ENCODE measurements at regions of chr17 and their contacts with region 1.

Region 1: GRCh38 chr17:55735731-55736405 is 13.2 kb upstream of the TMEM100 start:
- DNase-seq: peak; percentile 24
- ATAC-seq: peak; percentile 46
- H3K4me3 Mint-ChIP-seq: no peak overlapping the region
- H3K27ac Mint-ChIP-seq: no peak overlapping the region
- H3K4me1 Mint-ChIP-seq: peaks cover 46% of the 10 kb centered on the region
- H3K27me3 Mint-ChIP-seq: no peaks in the 10 kb centered on the region
- CTCF ChIP-seq: peak; percentile 18; the same call in 1 of the 2 replicates

Region 2: GRCh38 chr17:55673743-55674506 is 61.9 kb before region 1 on chr17:
- CTCF ChIA-PET with region 1: no interaction called
- POLR2A ChIA-PET with region 1: no interaction called
- DNase-seq: no peak
- ATAC-seq: no peak
- H3K4me3 Mint-ChIP-seq: no peak overlapping the region
- H3K27ac Mint-ChIP-seq: no peak overlapping the region
- H3K4me1 Mint-ChIP-seq: peaks cover 19% of the 10 kb centered on the region
- H3K27me3 Mint-ChIP-seq: no peaks in the 10 kb centered on the region; the same call in 1 of the 2 replicates
- CTCF ChIP-seq: no peak

Region 3: GRCh38 chr17:55750750-55751657 is 15.1 kb after region 1 on chr17 and contains the start of gene PCTP:
- CTCF ChIA-PET with region 1: interaction called, 22 read pairs
- POLR2A ChIA-PET with region 1: interaction called, 3 read pairs
- DNase-seq: peak; percentile 96
- ATAC-seq: peak; percentile 97
- H3K4me3 Mint-ChIP-seq: peak within 1 kb of the TSS; percentile 88
- H3K27ac Mint-ChIP-seq: peak within 1 kb of the TSS; percentile 65; the same call in 1 of the 2 replicates
- H3K4me1 Mint-ChIP-seq: peaks cover 14% of the 10 kb centered on the region
- H3K27me3 Mint-ChIP-seq: no peaks in the 10 kb centered on the region
- CTCF ChIP-seq: no peak
- total RNA-seq, gene PCTP: 10.3 to 14.2 TPM (median 12.2 TPM) in 3 replicates

Region 4: GRCh38 chr17:55770148-55770870 is 34.4 kb after region 1 on chr17:
- CTCF ChIA-PET with region 1: interaction called, 11 read pairs
- POLR2A ChIA-PET with region 1: no interaction called
- DNase-seq: no peak
- ATAC-seq: peak; percentile 77
- H3K4me3 Mint-ChIP-seq: no peak overlapping the region
- H3K27ac Mint-ChIP-seq: no peak overlapping the region
- H3K4me1 Mint-ChIP-seq: peaks cover 4% of the 10 kb centered on the region; the same call in 1 of the 2 replicates
- H3K27me3 Mint-ChIP-seq: no peaks in the 10 kb centered on the region
- CTCF ChIP-seq: no peak

Measured in WTC11 (cell line).